ENCODE measurements at regions of chr2 and their contacts with region 1.

Region 1: GRCh38 chr2:178450774-178451525 is at the starts of genes PJVK and PRKRA:
- DNase-seq: peak; percentile 91 to 99 (median 99)

Region 2: GRCh38 chr2:178256382-178257042 is 194.4 kb before region 1 on chr2:
- intact Hi-C with region 1: no loop called
- DNase-seq: no peak

Region 3: GRCh38 chr2:178478439-178479274 is 27.7 kb after region 1 on chr2 and contains the start of gene FKBP7:
- intact Hi-C with region 1: loop called (anchors 1 kb)
- DNase-seq: peak; percentile 83 to 96 (median 92)

Measured in head of caudate nucleus (tissue), 42 donors.